ENCODE measurements at regions of chr22 and their contacts with region 1.

Region 1: GRCh38 chr22:31489604-31490495 is at the start of gene EIF4ENIF1:
- DNase-seq: peak; percentile 85
- H3K4me3 Mint-ChIP-seq: peak within 1 kb of the TSS; percentile 86
- H3K27ac Mint-ChIP-seq: peak within 1 kb of the TSS; percentile 98
- H3K4me1 Mint-ChIP-seq: peaks cover 50% of the 10 kb centered on the region
- H3K27me3 Mint-ChIP-seq: no peaks in the 10 kb centered on the region
- total RNA-seq, gene EIF4ENIF1: 35.6 to 37.8 TPM

Region 2: DNA sequence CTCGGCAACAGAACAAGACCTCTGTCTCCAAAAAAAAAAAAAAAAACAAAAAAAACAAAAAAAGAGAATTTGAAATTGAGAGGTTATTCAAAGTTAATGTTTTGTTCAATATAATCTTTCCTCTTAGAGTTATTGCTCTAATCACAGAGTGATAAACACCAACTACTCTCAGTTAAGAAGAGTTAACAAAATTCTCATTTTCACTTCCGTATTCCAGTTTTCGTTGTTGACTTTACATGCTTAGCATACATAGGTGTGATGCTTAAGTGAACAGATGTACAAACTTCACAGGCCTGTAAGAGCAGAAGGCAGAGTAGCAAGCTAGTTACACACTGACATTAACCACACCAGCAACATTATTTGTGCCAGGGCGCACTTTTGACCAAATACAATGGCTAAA is 12.5 kb before region 1 on chr22:
- CTCF ChIA-PET with region 1: no interaction called
- POLR2A ChIA-PET with region 1: interaction called, 10 read pairs
- DNase-seq: no peak
- H3K4me3 Mint-ChIP-seq: no peak overlapping the region
- H3K27ac Mint-ChIP-seq: no peak overlapping the region
- H3K4me1 Mint-ChIP-seq: peaks cover 13% of the 10 kb centered on the region
- H3K27me3 Mint-ChIP-seq: no peaks in the 10 kb centered on the region